ENCODE measurements at regions of chr1 and their contacts with region 1.

Region 1: DNA sequence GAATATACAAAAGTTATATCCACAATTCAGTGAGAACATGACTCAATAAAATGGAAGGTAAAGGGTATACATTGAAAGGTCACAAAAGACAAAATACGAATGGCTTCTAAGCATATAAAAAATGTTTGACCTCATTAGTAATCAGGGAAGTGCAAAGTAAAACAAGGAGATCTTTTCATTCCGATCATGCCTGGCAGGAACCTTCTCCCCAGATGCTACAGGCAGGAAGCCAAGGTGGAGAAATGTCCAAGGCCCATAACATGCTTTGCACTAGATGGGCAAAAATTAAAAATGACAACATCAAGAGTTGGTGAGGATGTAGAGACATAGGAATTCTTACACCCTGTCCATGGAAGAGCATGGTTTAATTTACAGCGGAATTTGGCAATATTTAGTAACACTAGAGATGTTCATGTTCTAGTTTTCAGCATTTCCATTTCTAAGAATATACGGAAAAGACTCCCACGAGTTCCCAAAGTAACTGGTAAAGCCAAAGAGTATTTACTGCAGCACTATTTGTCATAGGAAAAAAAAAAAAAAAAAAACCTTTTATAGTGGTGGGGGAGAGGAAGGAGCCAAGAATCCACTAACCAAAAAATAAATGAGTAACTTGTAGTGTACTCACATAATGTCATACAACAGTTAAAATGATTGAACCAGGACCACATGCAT is 184.5 kb upstream of the KAZN start:
- DNase-seq: no peak
- ATAC-seq: no peak
- H3K4me3 Mint-ChIP-seq: no peak overlapping the region
- H3K27ac Mint-ChIP-seq: no peak overlapping the region
- H3K4me1 Mint-ChIP-seq: no peaks in the 10 kb centered on the region
- H3K27me3 Mint-ChIP-seq: peaks cover 4% of the 10 kb centered on the region

Region 2: GRCh38 chr1:14296795-14297194 is 117.2 kb before region 1 on chr1:
- CTCF ChIA-PET with region 1: no interaction called
- POLR2A ChIA-PET with region 1: no interaction called
- intact Hi-C with region 1: loop called in 1 of 2 experiments (anchors 5 kb)
- DNase-seq: no peak
- ATAC-seq: no peak
- H3K4me3 Mint-ChIP-seq: no peak overlapping the region
- H3K27ac Mint-ChIP-seq: no peak overlapping the region
- H3K4me1 Mint-ChIP-seq: no peaks in the 10 kb centered on the region
- H3K27me3 Mint-ChIP-seq: peaks cover 12% of the 10 kb centered on the region

Region 3: DNA sequence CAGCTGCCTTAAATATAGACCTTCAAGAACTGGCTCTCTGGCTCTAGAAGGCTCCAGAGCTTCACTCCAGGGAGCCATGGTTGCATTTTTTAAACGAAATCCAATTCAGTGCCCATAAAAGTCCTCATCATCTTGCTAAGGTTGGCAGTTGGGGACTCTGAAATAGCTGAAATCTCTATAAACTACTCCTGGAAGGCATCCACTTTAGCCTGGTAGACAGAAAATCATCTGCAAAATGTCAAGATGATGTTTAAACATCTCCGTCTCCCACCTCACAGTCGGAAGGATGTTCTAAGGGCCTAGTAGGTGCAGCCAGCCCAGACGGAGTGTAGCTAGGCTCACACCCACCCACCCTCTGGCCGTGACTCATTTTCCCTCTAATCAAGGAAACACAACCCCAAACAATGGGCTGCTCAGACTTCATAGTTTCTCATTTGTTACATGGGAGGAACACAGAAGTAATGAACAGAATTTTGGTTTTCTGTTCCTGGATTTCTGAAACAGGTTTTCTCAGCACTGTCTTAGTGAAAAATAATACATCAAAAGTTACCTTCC is 50.8 kb before region 1 on chr1:
- CTCF ChIA-PET with region 1: no interaction called
- POLR2A ChIA-PET with region 1: no interaction called
- intact Hi-C with region 1: no loop called
- DNase-seq: no peak
- ATAC-seq: no peak
- H3K4me3 Mint-ChIP-seq: no peak overlapping the region
- H3K27ac Mint-ChIP-seq: no peak overlapping the region
- H3K4me1 Mint-ChIP-seq: no peaks in the 10 kb centered on the region
- H3K27me3 Mint-ChIP-seq: peaks cover 4% of the 10 kb centered on the region

Region 4: GRCh38 chr1:14623090-14623489 is 209.1 kb after region 1 on chr1:
- CTCF ChIA-PET with region 1: no interaction called
- POLR2A ChIA-PET with region 1: no interaction called
- intact Hi-C with region 1: no loop called
- DNase-seq: no peak
- ATAC-seq: no peak
- H3K4me3 Mint-ChIP-seq: no peak overlapping the region
- H3K27ac Mint-ChIP-seq: no peak overlapping the region
- H3K4me1 Mint-ChIP-seq: no peaks in the 10 kb centered on the region
- H3K27me3 Mint-ChIP-seq: no peaks in the 10 kb centered on the region

Region 5: GRCh38 chr1:14639291-14640050 is 225.5 kb after region 1 on chr1:
- CTCF ChIA-PET with region 1: no interaction called
- POLR2A ChIA-PET with region 1: no interaction called
- intact Hi-C with region 1: no loop called
- DNase-seq: no peak
- ATAC-seq: no peak
- H3K4me3 Mint-ChIP-seq: no peak overlapping the region
- H3K27ac Mint-ChIP-seq: no peak overlapping the region
- H3K4me1 Mint-ChIP-seq: no peaks in the 10 kb centered on the region
- H3K27me3 Mint-ChIP-seq: no peaks in the 10 kb centered on the region